ENCODE measurements at regions of chr11 and their contacts with region 1.

Region 1: DNA sequence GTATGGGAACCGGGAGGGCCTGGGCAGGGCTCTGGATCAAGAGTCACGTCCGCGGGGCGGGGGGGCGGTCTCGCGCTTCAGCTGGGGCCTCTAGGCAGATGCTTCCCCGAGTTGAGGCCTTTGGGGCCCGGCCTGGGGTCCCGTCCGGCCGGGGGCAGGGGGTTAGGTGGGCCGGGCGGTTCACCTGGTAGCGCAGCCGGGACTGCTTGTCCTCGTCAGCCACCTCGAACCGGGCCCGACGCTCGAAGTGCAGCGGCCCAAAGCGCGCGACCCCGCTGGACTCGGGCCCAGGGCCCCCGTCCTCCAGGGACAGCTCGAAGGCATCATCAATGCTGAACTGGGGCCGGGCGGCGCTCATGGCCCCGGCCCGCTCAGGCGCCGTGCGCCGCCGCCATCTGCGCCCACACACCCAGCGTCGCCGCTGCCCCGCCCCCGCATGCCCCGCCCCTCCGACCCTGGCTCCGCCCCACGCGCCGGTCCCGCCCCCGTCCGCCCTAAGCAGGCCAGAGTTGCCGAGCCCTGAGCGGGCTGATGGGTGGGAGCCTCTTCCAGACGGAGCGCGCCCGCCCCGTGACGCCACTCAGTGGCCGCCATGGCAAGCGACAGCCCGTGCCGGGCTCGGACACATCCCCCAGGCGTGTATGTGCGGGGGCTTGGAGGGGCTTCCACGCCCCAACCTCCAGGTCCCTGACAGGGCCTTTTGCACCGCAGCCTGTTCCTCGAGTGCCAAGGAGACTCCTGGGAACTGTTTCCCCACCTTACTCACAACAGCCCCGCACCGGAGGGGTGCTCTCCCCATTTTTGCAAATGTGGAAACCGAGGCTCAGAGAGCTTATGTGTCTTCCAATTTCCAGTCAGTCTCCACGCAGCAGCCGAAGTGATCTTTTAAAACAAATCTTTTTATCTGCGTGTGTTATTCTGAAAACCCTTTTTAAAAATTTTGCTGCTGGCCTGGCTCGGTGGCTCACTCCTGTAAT is at the start of gene TMEM134:
- DNase-seq: peak; percentile 80 to 91
- H3K4me3 ChIP-seq: peak within 1 kb of the TSS; percentile 92
- H3K27ac ChIP-seq: peak within 1 kb of the TSS; percentile 48
- H3K4me1 ChIP-seq: peaks cover 32% of the 10 kb centered on the region
- H3K27me3 ChIP-seq: no peaks in the 10 kb centered on the region
- CTCF ChIP-seq: peak; percentile 48
- total RNA-seq, gene TMEM134: 85.7 and 125 TPM in 2 replicates

Region 2: DNA sequence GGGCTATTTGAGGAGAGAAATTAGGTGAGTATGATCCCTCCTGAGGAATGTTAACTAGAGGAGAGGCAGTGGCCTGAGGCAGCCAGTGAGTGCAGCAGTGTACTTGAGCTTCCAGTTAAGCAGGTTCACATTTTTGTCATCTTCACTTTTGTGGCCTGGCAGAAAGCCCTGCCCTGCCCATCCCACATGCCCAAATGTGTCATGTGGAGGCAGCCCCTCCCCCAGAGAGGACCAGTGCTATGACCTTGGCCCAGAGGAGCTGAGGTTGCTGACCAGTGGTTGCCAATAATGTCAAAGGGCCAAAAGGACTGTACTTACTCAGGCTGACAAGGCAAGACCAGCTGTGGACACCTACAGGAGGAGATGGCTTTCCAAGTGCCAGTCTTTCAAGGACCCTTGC is 220.5 kb before region 1 on chr11:
- CTCF ChIA-PET with region 1: interaction called, 13 read pairs
- POLR2A ChIA-PET with region 1: no interaction called
- intact Hi-C with region 1: no loop called
- DNase-seq: peak; percentile 97 to 98
- H3K4me3 ChIP-seq: no peak overlapping the region; the same call in 1 of the 2 replicates
- H3K27ac ChIP-seq: peak overlapping the region; percentile 81
- H3K4me1 ChIP-seq: peaks cover 73% of the 10 kb centered on the region
- H3K27me3 ChIP-seq: no peaks in the 10 kb centered on the region
- CTCF ChIP-seq: no peak

Region 3: GRCh38 chr11:67401495-67402191 is 67.5 kb before region 1 on chr11 and contains the start of gene PPP1CA:
- CTCF ChIA-PET with region 1: interaction called, 9 read pairs
- POLR2A ChIA-PET with region 1: interaction called, 5 read pairs
- intact Hi-C with region 1: loop called (anchors 2 kb)
- DNase-seq: peak; percentile 64 to 94
- H3K4me3 ChIP-seq: peak within 1 kb of the TSS; percentile 99
- H3K27ac ChIP-seq: peak within 1 kb of the TSS; percentile 41; the same call in 1 of the 2 replicates
- H3K4me1 ChIP-seq: peaks cover 14% of the 10 kb centered on the region
- H3K27me3 ChIP-seq: no peaks in the 10 kb centered on the region
- CTCF ChIP-seq: peak; percentile 35; the same call in 1 of the 2 replicates
- total RNA-seq, gene PPP1CA: 306 and 351 TPM in 2 replicates

Region 4: DNA sequence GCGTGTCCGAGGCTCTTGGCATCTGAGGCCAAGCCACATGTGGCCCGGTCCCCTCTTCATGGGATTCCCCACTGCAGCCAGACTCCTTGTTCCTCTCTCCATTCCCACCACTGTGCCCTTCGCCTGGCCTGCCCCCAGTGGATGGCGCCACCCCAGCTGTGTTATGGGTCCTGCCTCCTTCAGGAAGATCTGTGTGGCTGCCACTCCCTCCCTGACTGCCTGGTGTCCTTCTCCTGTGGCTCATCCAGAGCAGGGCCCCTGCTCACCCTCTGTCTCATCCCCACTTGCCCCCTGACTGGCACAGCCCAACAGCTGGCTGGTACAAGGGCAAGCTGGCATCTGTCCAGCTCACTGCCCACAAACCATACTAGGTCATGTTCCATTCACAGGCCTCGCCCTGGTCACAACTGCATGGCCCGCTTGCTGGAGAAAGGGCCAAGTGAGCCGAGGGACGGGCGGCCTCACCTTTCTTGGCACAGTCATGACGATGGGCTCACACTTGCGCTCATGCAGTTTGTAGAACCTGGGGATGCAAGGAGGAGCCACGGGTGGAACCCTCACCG is 29.7 kb before region 1 on chr11:
- CTCF ChIA-PET with region 1: no interaction called
- POLR2A ChIA-PET with region 1: interaction called, 3 read pairs
- intact Hi-C with region 1: loop called (anchors 1 kb)
- DNase-seq: peak in 1 of 2 experiments; percentile 52
- H3K4me3 ChIP-seq: no peak overlapping the region
- H3K27ac ChIP-seq: no peak overlapping the region
- H3K4me1 ChIP-seq: peaks cover 10% of the 10 kb centered on the region
- H3K27me3 ChIP-seq: no peaks in the 10 kb centered on the region
- CTCF ChIP-seq: peak; percentile 41; the same call in 1 of the 2 replicates

Region 5: DNA sequence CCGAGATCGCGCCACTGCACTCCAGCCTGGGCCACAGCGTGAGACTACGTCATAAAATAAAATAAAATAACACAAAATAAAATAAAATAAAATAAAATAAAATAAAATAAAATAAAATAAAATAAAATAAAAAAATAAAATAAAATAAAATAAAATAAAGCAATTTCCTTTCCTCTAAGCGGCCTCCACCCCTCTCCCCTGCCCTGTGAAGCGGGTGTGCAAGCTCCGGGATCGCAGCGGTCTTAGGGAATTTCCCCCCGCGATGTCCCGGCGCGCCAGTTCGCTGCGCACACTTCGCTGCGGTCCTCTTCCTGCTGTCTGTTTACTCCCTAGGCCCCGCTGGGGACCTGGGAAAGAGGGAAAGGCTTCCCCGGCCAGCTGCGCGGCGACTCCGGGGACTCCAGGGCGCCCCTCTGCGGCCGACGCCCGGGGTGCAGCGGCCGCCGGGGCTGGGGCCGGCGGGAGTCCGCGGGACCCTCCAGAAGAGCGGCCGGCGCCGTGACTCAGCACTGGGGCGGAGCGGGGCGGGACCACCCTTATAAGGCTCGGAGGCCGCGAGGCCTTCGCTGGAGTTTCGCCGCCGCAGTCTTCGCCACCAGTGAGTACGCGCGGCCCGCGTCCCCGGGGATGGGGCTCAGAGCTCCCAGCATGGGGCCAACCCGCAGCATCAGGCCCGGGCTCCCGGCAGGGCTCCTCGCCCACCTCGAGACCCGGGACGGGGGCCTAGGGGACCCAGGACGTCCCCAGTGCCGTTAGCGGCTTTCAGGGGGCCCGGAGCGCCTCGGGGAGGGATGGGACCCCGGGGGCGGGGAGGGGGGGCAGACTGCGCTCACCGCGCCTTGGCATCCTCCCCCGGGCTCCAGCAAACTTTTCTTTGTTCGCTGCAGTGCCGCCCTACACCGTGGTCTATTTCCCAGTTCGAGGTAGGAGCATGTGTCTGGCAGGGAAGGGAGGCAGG is 114.4 kb after region 1 on chr11 and contains the start of gene GSTP1:
- CTCF ChIA-PET with region 1: no interaction called
- POLR2A ChIA-PET with region 1: interaction called, 3 read pairs
- intact Hi-C with region 1: loop called (anchors 5 kb)
- DNase-seq: peak; percentile 75 to 94
- H3K4me3 ChIP-seq: peak within 1 kb of the TSS; percentile 82
- H3K27ac ChIP-seq: peak within 1 kb of the TSS; percentile 69
- H3K4me1 ChIP-seq: peaks cover 52% of the 10 kb centered on the region
- H3K27me3 ChIP-seq: no peaks in the 10 kb centered on the region
- CTCF ChIP-seq: peak; percentile 78
- total RNA-seq, gene GSTP1: 2,063 and 2,645 TPM in 2 replicates